AG04450 (cell line): ENCODE measurements at regions of chr6 and their contacts with region 1.

Region 1: DNA sequence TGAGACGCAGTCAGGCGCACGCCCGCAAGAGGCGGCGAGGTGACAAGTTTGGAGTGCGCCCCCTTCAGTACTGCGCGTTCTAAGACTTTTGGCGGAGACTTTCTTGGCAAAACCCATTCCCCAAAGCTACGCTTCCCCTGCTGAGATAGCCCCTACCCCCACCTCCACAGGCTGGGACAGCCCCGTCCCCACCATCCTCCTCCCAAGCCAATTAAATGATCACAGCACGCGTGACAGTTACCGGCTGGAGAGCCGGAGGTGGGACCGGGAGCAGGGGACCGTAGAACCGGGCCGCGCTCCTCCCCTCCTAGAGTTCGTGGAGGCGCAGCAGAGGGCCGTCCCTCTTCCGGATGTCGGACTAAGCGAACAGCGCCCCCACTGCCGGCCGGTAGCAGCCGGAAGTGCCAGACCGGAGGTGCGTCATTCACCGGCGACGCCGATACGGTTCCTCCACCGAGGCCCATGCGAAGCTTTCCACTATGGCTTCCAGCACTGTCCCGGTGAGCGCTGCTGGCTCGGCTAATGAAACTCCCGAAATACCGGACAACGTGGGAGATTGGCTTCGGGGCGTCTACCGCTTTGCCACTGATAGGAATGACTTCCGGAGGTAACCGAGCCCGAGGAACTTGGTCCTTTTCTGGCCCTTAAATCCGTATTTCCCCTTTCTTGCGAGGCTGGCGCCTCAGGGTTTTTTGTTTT is at the start of gene TOMM6:
- DNase-seq: peak; percentile 85
- H3K4me3 ChIP-seq: peak within 1 kb of the TSS; percentile 100
- H3K27ac ChIP-seq: peak within 1 kb of the TSS; percentile 84
- H3K27me3 ChIP-seq: no peaks in the 10 kb centered on the region
- CTCF ChIP-seq: peak; percentile 75
- polyA plus RNA-seq, gene TOMM6: 165 and 192 TPM in 2 replicates

Region 2: GRCh38 chr6:41424370-41425058 is 362.9 kb before region 1 on chr6:
- CTCF ChIA-PET with region 1: no interaction called
- POLR2A ChIA-PET with region 1: no interaction called
- DNase-seq: peak; percentile 55
- H3K4me3 ChIP-seq: no peak overlapping the region
- H3K27ac ChIP-seq: no peak overlapping the region
- H3K27me3 ChIP-seq: peaks cover 48% of the 10 kb centered on the region
- CTCF ChIP-seq: peak; percentile 92

Region 3: GRCh38 chr6:41767156-41767833 is 20.1 kb before region 1 on chr6:
- CTCF ChIA-PET with region 1: interaction called, 15 read pairs
- POLR2A ChIA-PET with region 1: interaction called, 6 read pairs
- DNase-seq: peak; percentile 55
- H3K4me3 ChIP-seq: no peak overlapping the region
- H3K27ac ChIP-seq: peak overlapping the region; percentile 75
- H3K27me3 ChIP-seq: peaks cover 4% of the 10 kb centered on the region
- CTCF ChIP-seq: no peak

Region 4: DNA sequence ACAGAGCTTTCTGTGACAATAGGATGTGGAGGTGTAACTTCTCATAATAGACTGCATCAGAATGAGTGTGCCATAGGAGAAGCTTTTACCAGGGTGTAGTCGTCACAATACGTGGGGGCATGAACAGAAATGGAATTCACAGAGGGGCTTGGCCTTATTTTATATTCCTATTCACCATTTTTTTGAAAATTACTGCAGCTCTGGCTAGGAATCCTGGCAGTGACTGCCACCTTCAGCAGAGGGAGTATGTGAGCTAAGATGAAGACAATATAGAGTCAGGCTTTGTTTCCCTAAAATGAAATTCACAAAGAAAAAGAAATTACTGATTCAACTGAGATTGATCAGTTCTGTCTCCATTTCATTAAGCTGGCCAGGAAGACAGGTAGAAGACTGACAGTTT is 14.0 kb after region 1 on chr6:
- CTCF ChIA-PET with region 1: interaction called, 75 read pairs
- POLR2A ChIA-PET with region 1: interaction called, 11 read pairs
- DNase-seq: no peak
- H3K4me3 ChIP-seq: no peak overlapping the region
- H3K27ac ChIP-seq: no peak overlapping the region
- H3K27me3 ChIP-seq: no peaks in the 10 kb centered on the region
- CTCF ChIP-seq: peak; percentile 81

Region 5: GRCh38 chr6:41914869-41915530 is 127.6 kb after region 1 on chr6:
- CTCF ChIA-PET with region 1: interaction called, 67 read pairs
- POLR2A ChIA-PET with region 1: no interaction called
- DNase-seq: no peak
- H3K4me3 ChIP-seq: no peak overlapping the region
- H3K27ac ChIP-seq: no peak overlapping the region
- H3K27me3 ChIP-seq: no peaks in the 10 kb centered on the region
- CTCF ChIP-seq: no peak

Region 6: DNA sequence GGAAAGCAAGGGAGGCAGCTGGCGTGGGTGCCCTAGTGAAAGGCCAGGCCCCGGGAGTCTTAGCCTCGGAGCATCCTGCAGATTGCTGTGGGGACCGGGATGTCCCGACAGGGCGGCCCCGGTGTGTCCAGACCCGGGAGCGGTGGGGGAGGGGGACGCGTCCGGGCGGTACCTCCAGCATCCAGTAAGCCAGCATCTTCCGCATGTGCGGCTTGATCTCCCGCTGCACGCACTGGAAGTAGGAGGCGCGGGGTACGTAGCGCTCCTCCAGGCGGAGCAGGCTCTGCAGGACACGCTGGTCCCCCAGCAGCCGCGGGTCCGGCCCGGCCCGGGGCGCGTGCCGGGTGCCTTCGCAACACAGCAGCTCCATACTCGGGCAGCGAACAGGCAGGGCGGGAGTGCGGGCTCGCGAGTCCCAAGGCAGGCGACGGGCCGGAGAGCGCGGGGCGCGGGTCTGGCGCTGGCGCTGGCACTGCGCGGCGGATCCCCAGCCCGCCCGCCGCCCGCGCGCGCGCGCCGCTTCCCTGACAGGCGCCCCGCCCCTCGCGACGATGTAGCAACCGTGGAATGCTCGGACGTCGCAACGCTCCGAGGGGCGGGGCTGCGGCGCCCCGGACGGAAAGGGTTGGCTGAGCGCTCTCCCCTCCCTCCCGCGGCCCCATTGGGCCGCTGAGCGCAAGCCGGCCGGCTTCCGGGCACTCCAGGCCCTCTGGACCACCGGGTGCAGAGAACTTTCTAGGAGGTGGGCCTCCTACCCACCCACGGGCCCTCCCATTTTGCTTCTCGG is 154.1 kb after region 1 on chr6 and contains the start of gene CCND3:
- CTCF ChIA-PET with region 1: interaction called, 36 read pairs
- POLR2A ChIA-PET with region 1: interaction called, 3 read pairs
- DNase-seq: peak; percentile 75
- H3K4me3 ChIP-seq: peak within 1 kb of the TSS; percentile 98
- H3K27ac ChIP-seq: peak within 1 kb of the TSS; percentile 57
- H3K27me3 ChIP-seq: no peaks in the 10 kb centered on the region
- CTCF ChIP-seq: no peak
- polyA plus RNA-seq, gene CCND3: 25.8 and 30.9 TPM in 2 replicates

Region 7: DNA sequence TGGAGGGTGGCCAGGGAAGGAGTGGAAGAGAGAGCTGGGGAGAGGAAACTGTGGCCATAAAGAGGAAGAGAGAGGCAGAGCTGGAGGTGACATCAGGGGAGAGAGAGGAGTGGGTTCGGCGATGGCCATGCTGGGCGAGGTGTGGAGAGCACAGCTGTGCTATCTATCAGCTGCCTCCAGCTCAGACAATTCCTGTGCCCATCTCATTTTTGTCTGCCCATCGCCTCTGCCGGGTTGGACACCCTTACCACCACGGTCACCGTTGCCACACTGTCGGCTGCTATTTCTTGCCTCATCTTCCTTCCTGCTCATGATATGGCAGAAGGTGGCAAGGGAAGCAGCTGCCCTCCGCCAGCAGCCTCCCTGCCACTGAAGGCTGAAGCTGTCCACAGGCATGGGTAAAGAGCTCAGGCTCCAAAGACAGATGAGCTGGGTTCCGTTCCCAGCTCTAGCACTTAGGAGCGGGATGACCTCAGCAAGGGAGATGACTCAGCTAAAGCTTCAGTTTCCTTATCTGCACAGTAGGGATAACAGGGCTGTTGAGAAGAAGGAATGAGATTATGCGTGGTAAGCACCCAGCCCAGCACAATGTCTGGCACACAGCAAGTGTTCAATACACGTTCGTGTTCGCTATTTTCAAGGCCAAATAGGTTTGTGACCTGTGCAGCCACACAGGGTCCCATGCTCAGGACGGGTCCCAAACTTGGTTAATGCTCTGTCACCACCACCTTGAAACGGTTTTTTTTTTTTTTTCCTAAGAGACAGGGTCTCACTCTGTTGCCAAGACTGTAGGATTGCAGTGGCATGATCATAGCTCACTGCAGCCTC is 241.1 kb after region 1 on chr6:
- CTCF ChIA-PET with region 1: interaction called, 10 read pairs
- POLR2A ChIA-PET with region 1: no interaction called
- DNase-seq: no peak
- H3K4me3 ChIP-seq: no peak overlapping the region
- H3K27ac ChIP-seq: no peak overlapping the region
- H3K27me3 ChIP-seq: no peaks in the 10 kb centered on the region
- CTCF ChIP-seq: no peak

Region 8: DNA sequence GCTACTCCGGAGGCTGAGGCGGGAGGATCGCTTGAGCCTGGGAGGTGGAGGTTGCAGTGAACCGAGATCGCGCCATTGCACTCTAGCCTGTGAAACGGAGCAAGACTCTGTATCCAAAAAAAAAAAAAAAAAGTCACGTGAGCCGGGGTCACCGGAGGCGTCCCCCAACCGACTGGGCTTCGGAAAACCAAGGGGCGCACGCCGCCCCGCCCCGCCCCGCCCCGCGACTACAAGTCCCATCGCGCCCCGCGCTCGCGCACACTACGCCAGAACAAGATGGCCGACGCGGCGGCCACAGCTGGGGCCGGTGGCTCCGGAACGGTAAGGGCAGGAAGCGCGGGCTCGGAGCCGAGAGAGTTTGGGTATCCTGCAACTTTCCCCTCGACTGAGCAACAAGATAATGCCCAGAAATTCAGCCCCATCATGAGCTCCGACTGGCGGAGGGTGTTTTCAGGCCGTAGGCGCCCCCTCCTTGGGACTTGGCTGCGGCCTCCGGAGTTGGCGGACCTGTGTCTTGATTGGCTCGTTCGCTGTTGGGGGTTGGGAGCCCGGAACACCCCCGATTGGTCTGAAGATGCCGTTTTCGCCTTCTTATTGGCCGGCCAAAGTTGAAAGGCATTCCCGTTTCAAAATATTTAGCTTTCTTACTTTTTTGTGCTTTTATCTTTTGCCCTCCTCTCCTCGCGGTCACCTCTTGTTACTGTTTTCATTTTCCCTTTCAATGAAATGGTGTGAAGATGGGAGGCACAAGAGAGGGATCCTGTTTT is 263.1 kb after region 1 on chr6 and contains the start of gene TAF8:
- CTCF ChIA-PET with region 1: interaction called, 65 read pairs
- POLR2A ChIA-PET with region 1: no interaction called
- DNase-seq: peak; percentile 82
- H3K4me3 ChIP-seq: peak within 1 kb of the TSS; percentile 90
- H3K27ac ChIP-seq: peak within 1 kb of the TSS; percentile 93
- H3K27me3 ChIP-seq: no peaks in the 10 kb centered on the region
- CTCF ChIP-seq: no peak
- polyA plus RNA-seq, gene TAF8: 14.6 and 15.0 TPM in 2 replicates

Region 9: DNA sequence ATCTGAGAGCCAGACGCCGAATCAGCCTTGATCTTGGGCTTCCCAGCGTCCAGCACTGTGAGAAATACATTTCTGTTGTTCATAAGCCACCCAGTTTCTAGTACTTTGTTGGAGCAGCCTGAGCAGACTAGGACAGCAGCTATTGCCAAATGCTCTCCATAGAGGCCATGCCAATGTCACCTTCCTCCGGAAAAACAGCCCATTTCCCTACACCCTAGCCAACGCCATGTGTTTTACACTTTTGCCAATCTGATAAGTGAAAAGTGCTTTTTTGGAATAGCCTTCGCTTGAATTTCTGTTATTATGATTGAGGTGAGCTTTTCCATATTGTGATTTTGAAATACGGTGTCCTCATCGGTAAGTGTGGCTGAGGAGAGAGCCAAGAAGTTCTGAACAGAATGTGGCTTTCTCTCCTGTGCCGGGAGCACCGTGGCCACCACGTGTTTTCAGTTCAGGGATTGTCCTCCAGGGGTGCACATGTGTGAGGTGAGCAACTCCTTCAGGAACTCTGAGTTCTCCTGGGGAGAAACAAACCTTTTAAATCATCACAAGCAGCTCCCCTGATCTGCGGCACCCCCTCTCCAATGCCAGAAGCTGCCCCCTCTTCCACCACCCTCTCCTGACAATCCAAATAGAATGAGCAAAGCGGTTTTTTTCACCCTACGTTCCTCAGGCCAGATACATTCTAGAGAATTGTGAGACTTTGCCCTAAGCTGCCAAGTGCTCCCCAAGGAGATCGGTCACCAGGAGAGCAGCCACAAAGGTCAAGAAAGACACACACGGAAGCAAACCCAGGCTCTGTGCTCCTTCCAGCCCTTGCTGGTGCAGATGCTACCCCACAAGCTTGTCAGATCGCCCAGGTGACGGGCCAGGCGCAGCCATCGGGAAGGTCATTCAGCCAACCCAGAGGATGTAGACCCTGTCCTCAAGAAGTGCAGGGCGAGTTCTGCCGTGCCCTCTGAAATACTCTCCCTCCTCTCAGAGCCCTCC is 299.0 kb after region 1 on chr6:
- CTCF ChIA-PET with region 1: no interaction called
- POLR2A ChIA-PET with region 1: no interaction called
- DNase-seq: no peak
- H3K4me3 ChIP-seq: no peak overlapping the region
- H3K27ac ChIP-seq: no peak overlapping the region
- H3K27me3 ChIP-seq: no peaks in the 10 kb centered on the region
- CTCF ChIP-seq: peak; percentile 45